ENCODE measurements at regions of chr11 and their contacts with region 1.

Region 1: DNA sequence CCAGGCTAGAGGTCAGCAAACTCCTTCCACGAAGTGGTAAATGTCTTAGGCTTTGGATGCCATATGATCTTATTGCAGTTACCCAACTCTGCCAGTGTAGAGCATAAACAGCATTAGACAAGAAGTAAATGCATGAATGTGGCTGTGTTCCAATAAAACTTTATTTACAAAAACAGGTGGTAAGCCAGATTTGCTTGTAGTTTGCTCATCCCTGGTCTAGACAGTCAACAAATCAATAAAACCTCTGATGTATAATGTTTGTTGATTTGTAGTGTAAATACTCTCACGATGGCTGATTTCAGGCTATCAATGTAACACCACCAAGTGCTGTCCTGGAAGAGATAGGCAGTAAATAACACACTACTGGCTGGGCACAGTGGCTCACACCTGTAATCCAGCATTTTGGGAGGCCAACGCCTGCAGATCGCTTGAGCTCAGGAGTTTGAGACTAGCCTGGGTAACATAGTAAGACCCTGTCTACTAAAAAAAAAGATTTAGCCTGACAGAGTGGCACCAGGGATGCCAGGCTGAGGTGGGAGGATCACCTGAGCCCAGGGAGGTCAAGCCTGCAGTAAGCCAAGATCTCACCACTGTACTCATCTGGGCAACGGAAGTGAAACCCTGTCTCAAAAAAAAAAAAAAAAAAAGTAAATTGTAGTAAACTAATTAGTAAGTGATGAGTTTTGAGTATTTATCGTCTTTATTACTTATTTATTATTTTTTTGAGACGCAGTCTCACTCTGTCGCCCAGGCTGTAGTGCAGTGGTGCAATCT is 6.9 kb upstream of the CATSPER1 start:
- DNase-seq: no peak
- H3K27ac ChIP-seq: no peak overlapping the region
- CTCF ChIP-seq: no peak

Region 2: GRCh38 chr11:65960796-65961231 is 72.3 kb before region 1 on chr11:
- CTCF ChIA-PET with region 1: no interaction called
- POLR2A ChIA-PET with region 1: interaction called, 10 read pairs
- DNase-seq: no peak
- H3K27ac ChIP-seq: peak overlapping the region; percentile 86
- CTCF ChIP-seq: no peak

Region 3: GRCh38 chr11:65973439-65974110 is 59.6 kb before region 1 on chr11:
- CTCF ChIA-PET with region 1: no interaction called
- POLR2A ChIA-PET with region 1: no interaction called
- DNase-seq: peak; percentile 68
- H3K27ac ChIP-seq: peak overlapping the region; percentile 67
- CTCF ChIP-seq: no peak